OCI-LY7 (cell line): ENCODE measurements at regions of chr20 and their contacts with region 1.

Region 1: DNA sequence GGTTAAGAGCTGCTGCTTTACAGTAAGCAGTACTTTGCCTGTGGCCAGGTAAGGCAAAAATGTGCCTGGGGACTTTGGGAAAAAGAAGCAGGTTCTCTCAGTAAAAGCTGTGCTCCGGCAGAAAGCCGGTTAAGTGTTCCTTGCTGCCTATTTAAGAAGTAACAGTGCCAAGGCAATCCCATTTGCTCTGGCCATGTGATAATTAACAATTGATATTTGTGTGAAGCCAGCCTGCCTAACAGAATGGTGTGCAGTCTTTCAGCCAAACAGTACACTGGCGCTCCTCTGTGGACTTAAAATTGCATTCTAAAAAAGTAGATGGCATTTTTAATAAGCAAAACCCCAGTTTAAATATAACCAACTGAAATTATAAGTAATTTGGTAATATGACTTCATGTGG is 430.3 kb downstream of the PLCB1 start:
- DNase-seq: no peak
- H3K4me3 ChIP-seq: no peak overlapping the region
- H3K27ac ChIP-seq: no peak overlapping the region
- H3K4me1 ChIP-seq: no peaks in the 10 kb centered on the region
- CTCF ChIP-seq: no peak

Region 2: GRCh38 chr20:8578191-8578865 is 16.0 kb after region 1 on chr20:
- CTCF ChIA-PET with region 1: no interaction called
- POLR2A ChIA-PET with region 1: no interaction called
- intact Hi-C with region 1: no loop called
- DNase-seq: no peak
- H3K4me3 ChIP-seq: no peak overlapping the region
- H3K27ac ChIP-seq: no peak overlapping the region
- H3K4me1 ChIP-seq: peaks cover under 1% of the 10 kb centered on the region
- CTCF ChIP-seq: no peak

Region 3: DNA sequence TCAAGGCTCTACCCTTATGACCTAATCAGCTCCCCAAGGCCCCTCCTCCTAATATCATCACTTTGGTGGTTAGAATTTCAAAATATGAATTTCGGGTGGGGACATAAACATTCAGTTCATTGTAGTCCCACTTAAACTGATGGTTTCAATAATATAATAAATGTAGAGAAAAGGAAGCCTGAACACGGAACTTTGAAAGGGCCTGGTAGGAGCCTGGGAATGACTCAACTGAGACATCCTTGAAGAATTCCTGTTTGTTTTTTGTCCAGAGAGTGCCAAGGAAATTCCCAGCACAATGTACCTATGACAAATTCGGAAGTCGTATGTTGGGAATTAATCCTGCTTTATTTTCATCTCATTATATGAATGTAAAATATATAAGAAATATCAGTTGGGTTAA is 27.6 kb after region 1 on chr20:
- CTCF ChIA-PET with region 1: no interaction called
- POLR2A ChIA-PET with region 1: no interaction called
- intact Hi-C with region 1: no loop called
- DNase-seq: no peak
- H3K4me3 ChIP-seq: no peak overlapping the region
- H3K27ac ChIP-seq: no peak overlapping the region
- H3K4me1 ChIP-seq: no peaks in the 10 kb centered on the region
- CTCF ChIP-seq: no peak

Region 4: GRCh38 chr20:8633366-8633765 is 71.0 kb after region 1 on chr20:
- CTCF ChIA-PET with region 1: no interaction called
- POLR2A ChIA-PET with region 1: no interaction called
- intact Hi-C with region 1: loop called (anchors 5 kb)
- DNase-seq: no peak
- H3K4me3 ChIP-seq: no peak overlapping the region
- H3K27ac ChIP-seq: no peak overlapping the region
- H3K4me1 ChIP-seq: no peaks in the 10 kb centered on the region
- CTCF ChIP-seq: no peak

Region 5: GRCh38 chr20:8740265-8740664 is 177.9 kb after region 1 on chr20:
- CTCF ChIA-PET with region 1: no interaction called
- POLR2A ChIA-PET with region 1: no interaction called
- intact Hi-C with region 1: no loop called
- DNase-seq: no peak
- H3K4me3 ChIP-seq: no peak overlapping the region
- H3K27ac ChIP-seq: no peak overlapping the region
- H3K4me1 ChIP-seq: no peaks in the 10 kb centered on the region
- CTCF ChIP-seq: no peak

Region 6: DNA sequence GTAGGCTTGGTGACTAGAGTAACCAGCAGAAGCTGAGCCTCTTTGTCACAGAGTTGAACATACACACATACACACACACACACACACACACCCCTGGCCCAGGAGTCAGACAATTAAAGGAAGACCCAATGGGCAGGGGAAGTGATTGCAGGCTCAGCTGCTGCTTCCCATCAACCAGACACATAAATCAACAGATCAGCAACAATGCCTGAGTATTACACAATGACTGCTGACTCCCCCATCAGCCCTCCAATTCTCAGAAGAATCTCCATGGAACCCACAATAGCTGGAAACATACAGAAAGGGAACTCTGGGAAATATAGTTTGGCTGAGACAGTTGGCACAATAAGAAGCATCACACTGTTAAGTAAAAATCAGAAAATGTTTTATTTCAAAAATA is 236.1 kb after region 1 on chr20:
- CTCF ChIA-PET with region 1: no interaction called
- POLR2A ChIA-PET with region 1: no interaction called
- intact Hi-C with region 1: no loop called
- DNase-seq: no peak
- H3K4me3 ChIP-seq: no peak overlapping the region
- H3K27ac ChIP-seq: no peak overlapping the region
- H3K4me1 ChIP-seq: no peaks in the 10 kb centered on the region
- CTCF ChIP-seq: no peak